ENCODE measurements at regions of chr6 and their contacts with region 1.

Region 1: GRCh38 chr6:27672113-27672799 is 199.4 kb upstream of the ZNF184 start:
- DNase-seq: peak; percentile 83
- H3K4me3 ChIP-seq: peak overlapping the region; percentile 85
- H3K27ac ChIP-seq: peak overlapping the region; percentile 58
- H3K4me1 ChIP-seq: peaks cover 32% of the 10 kb centered on the region
- H3K27me3 ChIP-seq: no peaks in the 10 kb centered on the region
- CTCF ChIP-seq: no peak

Region 2: DNA sequence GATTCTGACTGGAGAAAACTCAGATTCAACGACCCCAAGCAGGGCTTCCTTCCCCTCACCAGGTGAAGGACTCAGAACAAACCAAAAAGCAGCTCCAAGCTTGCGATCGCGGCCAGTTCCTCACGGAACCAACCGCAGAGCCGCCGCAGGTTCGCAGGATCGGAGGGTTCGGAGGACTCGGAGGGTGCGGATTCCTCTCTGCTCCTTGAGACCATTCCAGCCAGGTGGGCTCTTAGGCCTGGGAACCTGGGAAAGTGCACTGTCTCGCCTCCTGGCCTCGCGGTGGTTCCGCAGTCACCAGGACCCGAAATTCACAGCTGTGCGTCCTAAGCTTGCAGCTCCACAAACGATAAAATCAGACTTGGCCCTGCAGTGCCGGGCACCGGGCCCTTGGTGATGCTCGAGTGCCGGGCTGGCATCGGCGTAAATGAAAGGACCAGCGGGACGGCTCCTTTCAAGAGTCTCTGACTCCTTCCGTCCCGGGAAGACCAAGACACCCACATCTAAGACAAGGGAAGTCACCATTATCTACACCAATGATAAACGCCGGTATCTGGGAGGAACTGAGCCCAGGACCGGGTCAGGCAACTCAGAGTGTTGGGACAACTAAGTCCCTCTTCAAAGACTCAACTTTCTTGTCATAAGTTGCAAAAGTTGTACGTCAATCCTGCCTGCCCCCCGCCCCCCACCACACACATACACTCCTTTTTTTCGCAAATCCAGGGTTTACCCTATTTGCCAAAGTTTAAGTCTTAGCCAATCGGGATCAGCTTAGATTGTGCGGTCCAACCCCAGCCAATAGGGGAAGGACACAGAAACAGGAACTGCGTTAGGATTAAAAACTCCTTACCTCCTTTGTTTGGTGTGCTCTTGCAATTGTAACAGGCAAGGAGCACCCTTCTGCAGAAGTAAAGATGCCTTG is 494.5 kb before region 1 on chr6:
- CTCF ChIA-PET with region 1: no interaction called
- POLR2A ChIA-PET with region 1: no interaction called
- intact Hi-C with region 1: loop called (anchors 5 kb)
- DNase-seq: peak; percentile 80 to 88
- H3K4me3 ChIP-seq: peak overlapping the region; percentile 97
- H3K27ac ChIP-seq: peak overlapping the region; percentile 67
- H3K4me1 ChIP-seq: no peaks in the 10 kb centered on the region; the same call in 1 of the 2 replicates
- H3K27me3 ChIP-seq: no peaks in the 10 kb centered on the region
- CTCF ChIP-seq: peak; percentile 67

Region 3: GRCh38 chr6:27295301-27296081 is 376.8 kb before region 1 on chr6:
- CTCF ChIA-PET with region 1: no interaction called
- POLR2A ChIA-PET with region 1: no interaction called
- intact Hi-C with region 1: loop called (anchors 5 kb)
- DNase-seq: peak; percentile 49 to 73
- H3K4me3 ChIP-seq: peak overlapping the region; percentile 84
- H3K27ac ChIP-seq: no peak overlapping the region
- H3K4me1 ChIP-seq: peaks cover 27% of the 10 kb centered on the region
- H3K27me3 ChIP-seq: no peaks in the 10 kb centered on the region
- CTCF ChIP-seq: no peak

Region 4: GRCh38 chr6:27503436-27504030 is 168.7 kb before region 1 on chr6:
- CTCF ChIA-PET with region 1: no interaction called
- POLR2A ChIA-PET with region 1: no interaction called
- intact Hi-C with region 1: loop called (anchors 2 kb)
- DNase-seq: peak; percentile 66 to 75
- H3K4me3 ChIP-seq: peak overlapping the region; percentile 73
- H3K27ac ChIP-seq: peak overlapping the region; percentile 57
- H3K4me1 ChIP-seq: peaks cover 26% of the 10 kb centered on the region
- H3K27me3 ChIP-seq: no peaks in the 10 kb centered on the region
- CTCF ChIP-seq: no peak

Region 5: GRCh38 chr6:27630727-27631608 is 41.3 kb before region 1 on chr6:
- CTCF ChIA-PET with region 1: no interaction called
- POLR2A ChIA-PET with region 1: no interaction called
- intact Hi-C with region 1: loop called (anchors 5 kb)
- DNase-seq: peak; percentile 62 to 73
- H3K4me3 ChIP-seq: peak overlapping the region; percentile 59
- H3K27ac ChIP-seq: no peak overlapping the region
- H3K4me1 ChIP-seq: 0 out of 2 replicates have a peak, but pooled peaks cover 11% of the 10 kb centered on the region
- H3K27me3 ChIP-seq: no peaks in the 10 kb centered on the region
- CTCF ChIP-seq: no peak

Measured in PC-9 (cell line).